ENCODE measurements at regions of chr4 and their contacts with region 1.

Region 1: DNA sequence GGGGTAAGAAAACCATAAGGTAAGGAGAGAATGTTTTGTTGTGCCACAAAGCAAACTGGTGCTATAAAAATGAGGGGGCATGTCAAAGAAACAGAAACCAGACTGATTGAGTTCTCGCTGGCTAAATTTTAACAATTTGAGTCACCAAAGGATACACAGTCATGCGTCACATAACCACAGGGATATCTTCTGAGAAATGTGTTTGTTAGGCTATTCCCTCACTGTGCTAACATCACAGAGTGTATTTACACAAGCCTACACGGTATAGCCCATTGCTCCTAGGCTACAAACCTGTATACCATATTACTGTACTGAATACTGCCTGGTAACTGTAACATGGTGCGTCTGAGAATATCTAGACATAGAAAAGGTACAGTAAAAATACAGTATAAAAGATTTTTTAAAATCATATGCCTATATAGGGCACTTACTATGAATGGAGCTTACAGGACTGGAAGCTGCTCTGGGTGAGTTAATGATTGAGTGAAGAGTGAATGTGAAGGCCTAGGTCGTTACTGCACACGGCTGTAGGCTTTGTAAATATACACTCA is 50.1 kb downstream of the FBXW7 start:
- DNase-seq: peak; percentile 62

Region 2: DNA sequence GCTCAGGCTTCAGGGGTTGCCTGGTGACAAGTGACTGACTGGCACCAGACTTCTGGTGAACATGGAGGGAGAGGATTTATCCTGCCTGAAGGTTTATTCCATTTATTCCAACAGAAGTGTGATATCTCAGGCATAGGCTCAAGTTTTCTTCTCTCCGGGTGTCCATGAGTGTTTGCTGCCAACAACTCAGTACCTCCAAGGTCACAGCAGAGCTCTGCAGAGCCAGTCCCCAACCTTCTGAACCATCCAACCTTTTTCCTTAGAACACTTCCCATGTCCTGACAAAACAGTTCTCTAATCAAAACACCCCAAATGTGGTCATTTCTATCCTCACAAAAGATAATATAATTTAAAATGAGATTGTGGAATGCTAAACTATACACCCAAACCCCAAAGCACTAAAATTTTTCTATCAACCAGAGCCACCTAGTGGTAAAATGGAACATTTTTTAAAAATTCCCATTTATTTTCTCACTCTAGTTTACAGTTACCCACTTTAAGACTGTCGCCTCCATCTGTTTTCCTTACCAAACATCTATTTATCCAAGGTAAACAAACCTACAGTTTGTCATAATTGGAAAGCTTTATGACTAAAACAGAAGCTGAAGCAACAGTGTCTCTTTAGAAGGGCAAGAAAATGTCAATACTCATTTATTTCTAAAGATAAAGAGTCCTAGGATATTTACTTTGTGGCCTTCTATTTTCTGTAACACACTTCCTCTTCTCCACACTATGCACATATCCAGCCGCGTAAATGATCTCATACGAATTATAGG is 154.4 kb after region 1 on chr4:
- in situ Hi-C with region 1: loop called (anchors 25 kb)
- DNase-seq: peak; percentile 40

Region 3: GRCh38 chr4:152860051-152860450 is 374.2 kb after region 1 on chr4:
- in situ Hi-C with region 1: no loop called
- DNase-seq: no peak

Measured in SK-MEL-5 (cell line).